Endothelial cell of umbilical vein (primary cell): ENCODE measurements at regions of chr7 and their contacts with region 1.

Region 1: DNA sequence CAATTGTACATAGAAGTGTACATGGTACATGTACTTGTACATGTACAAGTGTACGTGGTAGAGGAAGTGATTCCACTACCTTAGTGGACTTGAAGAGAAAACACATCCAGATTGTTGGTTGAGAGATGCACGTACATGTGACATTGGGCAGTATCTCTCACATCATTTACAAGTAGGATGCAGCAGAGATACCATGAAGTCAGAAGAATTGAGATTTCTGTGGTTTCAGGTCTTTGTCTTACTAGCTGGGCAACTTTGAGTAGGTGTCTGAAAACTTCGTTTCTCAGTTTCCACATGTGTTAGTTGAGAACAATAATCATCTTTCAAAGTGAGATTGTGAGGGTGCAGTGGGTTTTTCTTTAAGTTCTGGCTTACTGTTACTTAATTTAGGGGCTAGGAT is 21.5 kb downstream of the CLDN12 start:
- DNase-seq: no peak
- H3K4me3 ChIP-seq: no peak overlapping the region
- H3K27ac ChIP-seq: no peak overlapping the region
- H3K4me1 ChIP-seq: peaks cover 9% of the 10 kb centered on the region
- H3K27me3 ChIP-seq: peaks cover 0 to 2% of the 10 kb centered on the region in 2 experiments
- CTCF ChIP-seq: no peak
- POLR2A ChIP-seq: no peak

Region 2: DNA sequence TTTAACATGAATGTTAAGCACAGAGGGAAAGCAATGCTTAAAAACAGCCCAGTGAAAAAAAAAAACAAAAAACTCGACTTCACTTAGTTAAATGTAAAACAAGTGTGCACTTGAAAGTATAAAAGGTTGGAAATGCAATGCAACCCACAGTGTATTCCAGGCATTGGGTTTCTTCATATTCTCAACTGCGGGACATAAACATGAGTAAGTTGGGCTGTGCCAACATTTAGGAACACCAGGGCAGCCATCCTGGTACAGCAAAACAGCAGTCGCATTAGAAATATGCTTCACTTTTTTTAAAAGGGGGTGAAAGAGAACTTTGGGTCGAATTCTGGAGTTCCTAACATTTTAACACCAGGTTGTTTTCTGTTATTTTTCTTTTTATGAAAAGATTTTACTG is 269.5 kb before region 1 on chr7:
- CTCF ChIA-PET with region 1: interaction called, 135 read pairs
- POLR2A ChIA-PET with region 1: no interaction called
- dilution Hi-C with region 1: no loop called
- intact Hi-C with region 1: loop called (anchors 1 kb)
- DNase-seq: peak; percentile 22
- H3K4me3 ChIP-seq: peak overlapping the region; percentile 26 to 77 (median 77)
- H3K27ac ChIP-seq: peak overlapping the region; percentile 53
- H3K4me1 ChIP-seq: peaks cover 37% of the 10 kb centered on the region
- H3K27me3 ChIP-seq: no peaks in the 10 kb centered on the region
- CTCF ChIP-seq: no peak
- POLR2A ChIP-seq: no peak

Region 3: DNA sequence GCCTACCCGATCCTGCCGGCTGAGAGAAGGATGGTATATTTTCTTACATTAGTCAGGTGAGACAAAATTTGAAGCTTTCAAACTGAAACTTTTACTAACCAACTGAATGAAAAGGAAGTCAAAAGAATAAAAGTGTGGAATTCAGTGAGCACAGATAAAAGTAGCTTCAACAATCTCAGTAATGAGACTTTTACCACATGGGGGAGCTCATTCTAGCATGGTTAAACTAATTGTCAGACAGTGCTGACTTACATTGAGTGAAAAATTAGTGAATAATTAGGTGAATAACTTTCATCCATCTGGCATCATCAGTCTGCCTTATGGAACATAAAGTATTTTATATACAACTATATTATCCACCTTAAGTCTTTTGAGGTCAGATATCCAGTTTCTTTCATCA is 112.0 kb before region 1 on chr7:
- CTCF ChIA-PET with region 1: interaction called, 248 read pairs
- POLR2A ChIA-PET with region 1: no interaction called
- dilution Hi-C with region 1: no loop called
- intact Hi-C with region 1: loop called (anchors 1 kb)
- DNase-seq: peak; percentile 25
- H3K4me3 ChIP-seq: no peak overlapping the region
- H3K27ac ChIP-seq: no peak overlapping the region
- H3K4me1 ChIP-seq: no peaks in the 10 kb centered on the region
- H3K27me3 ChIP-seq: peaks cover 11 to 17% of the 10 kb centered on the region in 2 experiments
- CTCF ChIP-seq: peak; percentile 4 to 23
- POLR2A ChIP-seq: no peak

Region 4: GRCh38 chr7:90390926-90391325 is 33.8 kb before region 1 on chr7:
- CTCF ChIA-PET with region 1: interaction called, 10 read pairs
- POLR2A ChIA-PET with region 1: no interaction called
- dilution Hi-C with region 1: no loop called
- intact Hi-C with region 1: no loop called
- DNase-seq: peak; percentile 59
- H3K4me3 ChIP-seq: no peak overlapping the region
- H3K27ac ChIP-seq: no peak overlapping the region
- H3K4me1 ChIP-seq: peaks cover 17% of the 10 kb centered on the region
- H3K27me3 ChIP-seq: no peaks in the 10 kb centered on the region
- CTCF ChIP-seq: no peak
- POLR2A ChIP-seq: no peak

Region 5: GRCh38 chr7:90445633-90446032 is 20.9 kb after region 1 on chr7:
- CTCF ChIA-PET with region 1: interaction called, 17 read pairs
- POLR2A ChIA-PET with region 1: no interaction called
- dilution Hi-C with region 1: no loop called
- intact Hi-C with region 1: no loop called
- DNase-seq: peak; percentile 57
- H3K4me3 ChIP-seq: no peak overlapping the region
- H3K27ac ChIP-seq: no peak overlapping the region
- H3K4me1 ChIP-seq: peaks cover 10% of the 10 kb centered on the region
- H3K27me3 ChIP-seq: peaks cover 0 to 3% of the 10 kb centered on the region in 2 experiments
- CTCF ChIP-seq: no peak
- POLR2A ChIP-seq: no peak

Region 6: GRCh38 chr7:90488240-90488639 is 63.5 kb after region 1 on chr7:
- CTCF ChIA-PET with region 1: no interaction called
- POLR2A ChIA-PET with region 1: no interaction called
- dilution Hi-C with region 1: no loop called
- intact Hi-C with region 1: no loop called
- DNase-seq: no peak
- H3K4me3 ChIP-seq: no peak overlapping the region
- H3K27ac ChIP-seq: no peak overlapping the region
- H3K4me1 ChIP-seq: no peaks in the 10 kb centered on the region
- H3K27me3 ChIP-seq: no peaks in the 10 kb centered on the region
- CTCF ChIP-seq: no peak
- POLR2A ChIP-seq: no peak